Right cardiac atrium (tissue), 5 donors: ENCODE measurements at regions of chr20 and their contacts with region 1.

Region 1: DNA sequence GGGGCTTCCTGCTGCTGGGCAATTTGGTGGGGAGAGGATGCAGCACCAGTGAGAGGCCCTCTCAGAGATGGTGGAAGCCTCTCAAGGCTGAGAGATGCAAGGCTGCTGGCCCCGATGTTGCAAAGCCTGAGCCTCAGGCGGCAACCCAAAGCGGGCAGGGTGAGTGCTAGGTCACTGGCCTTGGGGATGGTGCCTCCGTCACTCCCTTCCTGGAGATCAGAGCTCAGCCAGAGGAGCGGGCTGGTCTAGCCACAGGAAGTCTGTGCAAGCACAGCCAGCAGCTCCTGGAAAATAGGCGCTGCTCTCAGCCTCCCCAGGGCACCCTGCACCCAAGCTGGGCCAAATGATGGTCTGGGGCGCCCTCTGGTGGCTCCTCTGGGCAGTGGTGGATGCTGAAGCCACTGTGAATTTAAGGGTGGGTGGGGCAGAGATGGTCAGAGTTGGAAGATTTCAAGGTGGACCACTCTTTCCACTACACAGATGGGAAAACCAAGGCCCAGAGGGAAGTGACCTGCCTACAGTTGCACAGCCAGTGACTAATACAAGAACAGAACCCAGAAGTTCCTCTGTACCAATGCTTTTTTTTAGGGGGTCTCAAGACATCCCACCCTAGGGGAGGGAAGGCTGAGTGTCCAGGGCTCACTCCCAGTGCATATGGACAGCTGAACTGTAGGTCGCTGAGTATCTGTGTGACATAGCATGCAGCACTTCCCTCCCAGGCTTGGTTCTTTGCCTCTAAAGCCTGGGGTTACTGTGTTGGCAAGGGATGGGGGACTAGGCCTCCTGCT is 20.8 kb downstream of the C20orf203 start:
- DNase-seq: peak; percentile 86 to 94 (median 94)
- ATAC-seq: peak; percentile 96 to 98
- H3K4me3 ChIP-seq: no peak overlapping the region
- H3K27ac ChIP-seq: no peak overlapping the region
- H3K4me1 ChIP-seq: no peaks in the 10 kb centered on the region
- H3K27me3 ChIP-seq: no peaks in the 10 kb centered on the region

Region 2: DNA sequence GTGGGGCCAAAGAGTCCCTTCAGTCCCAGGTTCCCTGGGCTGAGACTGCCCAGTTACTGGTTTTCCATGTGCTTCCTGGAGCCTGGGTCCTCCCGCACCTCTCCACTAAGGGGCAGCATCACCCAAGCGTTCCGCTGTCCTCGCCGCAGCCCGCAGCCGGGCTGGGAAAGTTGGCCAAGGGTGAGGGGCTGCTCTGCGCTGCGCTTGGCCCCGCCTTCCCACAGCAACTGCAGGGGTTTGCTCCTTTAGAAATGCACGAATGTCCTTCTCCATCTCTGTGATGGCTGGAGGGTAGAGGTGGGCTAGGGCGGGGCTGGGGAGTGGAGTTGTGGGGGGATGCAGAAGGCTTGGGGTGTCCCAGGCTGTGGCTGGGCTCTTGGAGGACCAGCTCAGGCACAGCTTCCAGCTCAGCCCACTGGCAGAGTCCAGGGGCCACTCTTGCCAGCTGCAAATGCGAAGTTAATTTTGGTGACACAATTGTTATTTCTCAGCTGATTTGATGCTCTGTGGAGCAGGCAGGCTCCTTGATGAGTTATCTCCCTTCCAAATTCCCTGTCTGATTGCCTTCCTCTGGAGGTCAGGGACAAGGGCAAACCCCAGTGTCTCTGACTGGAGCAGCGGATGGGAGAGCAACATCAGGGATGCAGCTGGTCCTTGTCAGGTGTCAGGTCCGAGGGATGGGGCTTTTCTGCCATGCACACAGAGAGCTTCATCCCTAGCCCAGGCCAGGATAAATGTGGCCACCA is 131.0 kb before region 1 on chr20:
- intact Hi-C with region 1: loop called (anchors 1 to 5 kb)
- DNase-seq: peak; percentile 67 to 85 (median 84)
- ATAC-seq: peak; percentile 72
- H3K4me3 ChIP-seq: no peak overlapping the region
- H3K27ac ChIP-seq: no peak overlapping the region
- H3K4me1 ChIP-seq: peaks cover 2% of the 10 kb centered on the region
- H3K27me3 ChIP-seq: no peaks in the 10 kb centered on the region

Region 3: GRCh38 chr20:32535953-32536823 is 116.7 kb before region 1 on chr20:
- intact Hi-C with region 1: loop called in 1 of 4 experiments (anchors 5 kb)
- DNase-seq: peak in 2 of 3 donors; percentile 86 to 88
- ATAC-seq: peak; percentile 59 to 69
- H3K4me3 ChIP-seq: peak overlapping the region; percentile 61
- H3K27ac ChIP-seq: no peak overlapping the region
- H3K4me1 ChIP-seq: peaks cover 2% of the 10 kb centered on the region
- H3K27me3 ChIP-seq: no peaks in the 10 kb centered on the region